B cell (primary cell): ENCODE measurements at regions of chr5 and their contacts with region 1.

Region 1: GRCh38 chr5:140351609-140352334 is 5.4 kb upstream of the HBEGF start:
- DNase-seq: peak; percentile 82
- ATAC-seq: peak; percentile 76
- H3K4me3 ChIP-seq: no peak overlapping the region
- H3K4me3 Mint-ChIP-seq: no peak overlapping the region
- H3K27ac ChIP-seq: no peak overlapping the region
- H3K27ac Mint-ChIP-seq: no peak overlapping the region
- H3K4me1 ChIP-seq: peaks cover 26 to 30% of the 10 kb centered on the region in 2 donors
- H3K4me1 Mint-ChIP-seq: peaks cover 25% of the 10 kb centered on the region
- H3K27me3 ChIP-seq: peaks cover 0 to 12% (median 0%) of the 10 kb centered on the region in 4 experiments
- H3K27me3 Mint-ChIP-seq: peaks cover 9% of the 10 kb centered on the region
- CTCF ChIP-seq: peak; percentile 93

Region 2: DNA sequence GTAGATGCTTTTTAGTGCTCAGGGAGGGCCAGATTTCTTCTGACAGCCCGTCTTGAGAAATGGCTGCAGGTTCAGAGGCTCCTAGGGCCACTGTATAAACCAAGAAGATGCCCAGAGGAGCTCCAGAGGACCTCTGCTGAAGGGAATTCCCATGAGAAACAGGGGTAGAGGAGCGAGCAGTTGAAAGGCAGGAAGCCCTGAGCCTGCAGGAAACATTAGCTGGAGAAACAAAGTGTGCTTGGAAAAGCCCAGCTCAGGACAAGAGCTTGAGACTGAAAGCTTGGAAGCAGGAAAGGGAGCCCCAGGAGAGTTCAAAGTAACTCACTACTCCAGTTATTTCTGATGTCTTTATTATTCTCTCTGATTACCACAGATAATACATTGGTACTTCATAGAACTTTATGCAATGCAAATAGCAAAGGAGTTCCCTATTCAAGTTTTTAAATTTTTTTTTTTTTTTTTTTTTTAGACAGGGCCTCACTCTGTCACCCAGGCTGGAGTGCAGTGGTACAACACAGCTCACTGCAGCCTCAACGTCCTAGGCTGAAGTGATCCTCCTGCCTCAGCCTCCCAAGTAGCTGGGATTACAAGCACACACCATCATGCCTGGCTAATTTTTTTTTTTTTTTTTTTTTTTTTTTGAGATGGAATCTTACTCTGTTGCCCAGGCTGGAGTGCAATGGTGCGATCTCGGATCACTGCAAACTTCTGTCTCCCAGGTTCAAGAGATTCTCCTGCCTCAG is 21.9 kb before region 1 on chr5:
- CTCF ChIA-PET with region 1: interaction called, 18 read pairs
- POLR2A ChIA-PET with region 1: no interaction called
- intact Hi-C with region 1: no loop called
- DNase-seq: no peak
- ATAC-seq: no peak
- H3K4me3 ChIP-seq: no peak overlapping the region
- H3K4me3 Mint-ChIP-seq: no peak overlapping the region
- H3K27ac ChIP-seq: no peak overlapping the region
- H3K27ac Mint-ChIP-seq: no peak overlapping the region
- H3K4me1 ChIP-seq: no peaks in the 10 kb centered on the region
- H3K4me1 Mint-ChIP-seq: no peaks in the 10 kb centered on the region
- H3K27me3 ChIP-seq: peaks cover 0 to 3% (median 0%) of the 10 kb centered on the region in 4 experiments
- H3K27me3 Mint-ChIP-seq: no peaks in the 10 kb centered on the region
- CTCF ChIP-seq: no peak